ENCODE measurements at regions of chr6 and their contacts with region 1.

Region 1: GRCh38 chr6:90478789-90479602 is 107.9 kb downstream of the MAP3K7 start:
- DNase-seq: peak; percentile 77 to 89
- H3K4me3 ChIP-seq: no peak overlapping the region
- H3K27ac ChIP-seq: no peak overlapping the region
- H3K4me1 ChIP-seq: peaks cover 2 to 11% (median 5%) of the 10 kb centered on the region in 4 experiments; a peak in 4 of 7 replicates
- H3K27me3 ChIP-seq: no peaks in the 10 kb centered on the region
- CTCF ChIP-seq: peak; percentile 70 to 90 (median 84)
- EP300 ChIP-seq: no peak
- POLR2A ChIP-seq: no peak
- RAD21 ChIP-seq: peak; percentile 98 to 99

Region 2: DNA sequence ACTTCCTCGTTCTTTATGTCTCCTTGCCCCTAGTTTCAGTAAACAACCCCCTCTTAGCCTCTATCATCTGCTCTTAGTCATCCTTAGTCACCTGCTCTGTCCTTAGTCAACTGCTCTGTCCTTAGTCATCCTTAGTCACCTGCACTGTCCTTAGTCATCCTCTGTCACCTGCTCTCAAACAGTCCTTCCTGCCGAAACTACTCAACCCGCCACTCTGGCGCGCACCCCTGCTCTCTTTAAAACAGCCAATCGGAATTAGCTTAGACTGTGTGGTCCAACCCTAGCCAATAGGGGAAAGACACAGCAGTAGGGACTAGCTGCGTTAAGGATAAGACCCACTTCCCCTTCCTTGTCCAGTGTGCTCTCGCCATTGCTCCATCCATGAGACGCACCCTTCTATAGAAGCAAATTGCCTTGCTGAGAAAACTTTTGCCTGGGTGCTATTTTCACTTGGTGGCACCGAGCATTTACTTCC is 256.2 kb before region 1 on chr6:
- CTCF ChIA-PET with region 1: interaction called, 14 read pairs
- POLR2A ChIA-PET with region 1: no interaction called
- DNase-seq: no peak
- H3K4me3 ChIP-seq: no peak overlapping the region
- H3K27ac ChIP-seq: no peak overlapping the region
- H3K4me1 ChIP-seq: peaks cover 9 to 19% (median 13%) of the 10 kb centered on the region in 4 experiments; a peak in 5 of 7 replicates
- H3K27me3 ChIP-seq: no peaks in the 10 kb centered on the region
- CTCF ChIP-seq: no peak
- EP300 ChIP-seq: no peak
- POLR2A ChIP-seq: no peak
- RAD21 ChIP-seq: no peak

Region 3: DNA sequence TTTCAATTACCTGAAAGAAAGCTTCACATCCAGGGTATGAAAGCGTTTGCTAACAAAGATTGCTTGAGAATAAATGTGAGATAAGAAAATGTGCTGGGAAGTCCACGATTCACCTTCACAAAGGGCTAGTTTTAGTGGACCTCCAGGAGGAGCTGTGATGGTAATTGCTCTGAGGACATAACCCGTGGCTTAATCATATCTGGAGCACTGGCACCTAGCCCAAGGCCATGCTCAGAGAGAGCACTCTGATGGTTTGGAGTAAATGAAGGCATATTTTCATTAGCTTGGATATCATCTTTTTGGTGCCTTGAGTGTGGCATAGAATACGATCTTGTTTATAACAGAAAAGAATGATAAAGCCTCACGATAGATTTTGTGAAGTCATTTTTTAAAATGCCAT is 135.4 kb before region 1 on chr6:
- CTCF ChIA-PET with region 1: interaction called, 17 read pairs
- POLR2A ChIA-PET with region 1: no interaction called
- DNase-seq: no peak
- H3K4me3 ChIP-seq: no peak overlapping the region
- H3K27ac ChIP-seq: no peak overlapping the region
- H3K4me1 ChIP-seq: no peaks in the 10 kb centered on the region
- H3K27me3 ChIP-seq: no peaks in the 10 kb centered on the region
- CTCF ChIP-seq: no peak
- EP300 ChIP-seq: no peak
- POLR2A ChIP-seq: no peak
- RAD21 ChIP-seq: no peak

Region 4: DNA sequence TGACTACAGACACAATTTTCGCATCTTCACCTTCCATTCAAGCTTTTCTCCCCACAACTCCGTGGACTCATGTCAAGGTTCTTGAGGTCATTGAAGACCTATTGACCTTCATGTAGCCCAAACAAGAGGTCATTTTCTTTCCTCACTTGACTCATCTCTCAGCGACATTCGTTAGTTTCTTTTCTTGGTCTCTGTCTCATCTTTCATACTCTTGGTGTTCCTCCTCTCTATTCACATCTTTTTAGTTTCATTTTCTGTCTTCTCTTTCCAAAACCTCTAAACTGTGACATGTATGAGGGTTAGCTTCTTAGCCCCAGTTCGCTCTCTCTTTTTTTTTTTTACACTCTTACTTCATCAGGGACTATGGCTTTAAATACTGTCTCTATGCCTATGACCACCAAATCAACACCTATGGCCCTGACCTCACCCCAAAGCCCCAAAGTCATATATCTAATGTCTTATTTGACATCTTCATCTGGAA is 53.8 kb before region 1 on chr6:
- CTCF ChIA-PET with region 1: interaction called, 18 read pairs
- POLR2A ChIA-PET with region 1: no interaction called
- DNase-seq: no peak
- H3K4me3 ChIP-seq: no peak overlapping the region
- H3K27ac ChIP-seq: no peak overlapping the region
- H3K4me1 ChIP-seq: no peaks in the 10 kb centered on the region
- H3K27me3 ChIP-seq: no peaks in the 10 kb centered on the region
- CTCF ChIP-seq: no peak
- EP300 ChIP-seq: no peak
- POLR2A ChIP-seq: no peak
- RAD21 ChIP-seq: no peak

Region 5: GRCh38 chr6:90458353-90459224 is 20.4 kb before region 1 on chr6:
- CTCF ChIA-PET with region 1: interaction called, 179 read pairs
- POLR2A ChIA-PET with region 1: interaction called, 3 read pairs
- DNase-seq: no peak
- H3K4me3 ChIP-seq: no peak overlapping the region
- H3K27ac ChIP-seq: no peak overlapping the region
- H3K4me1 ChIP-seq: no peaks in the 10 kb centered on the region
- H3K27me3 ChIP-seq: no peaks in the 10 kb centered on the region
- CTCF ChIP-seq: no peak
- EP300 ChIP-seq: no peak
- POLR2A ChIP-seq: no peak
- RAD21 ChIP-seq: no peak

Region 6: DNA sequence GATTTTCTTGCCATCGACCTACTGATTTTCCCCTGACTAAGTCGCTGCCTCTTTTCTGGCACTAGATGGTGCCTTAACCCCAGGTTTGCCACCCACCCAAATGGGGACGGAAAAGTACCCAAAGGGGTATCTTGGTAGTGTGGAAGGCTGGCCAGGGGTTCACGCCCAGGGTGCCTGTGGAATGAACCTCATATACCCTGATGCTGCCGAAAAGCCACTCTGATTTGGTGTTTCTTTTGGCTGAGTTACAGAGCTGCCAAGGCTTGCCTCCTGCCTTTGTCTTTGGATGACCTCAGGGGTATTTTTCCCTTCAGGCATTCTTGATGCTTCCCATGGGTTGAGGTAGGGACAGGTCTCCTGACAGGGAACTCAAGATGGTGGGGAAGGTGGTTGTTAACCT is 29.8 kb after region 1 on chr6:
- CTCF ChIA-PET with region 1: interaction called, 21 read pairs
- POLR2A ChIA-PET with region 1: no interaction called
- DNase-seq: peak in 1 of 2 experiments; percentile 61
- H3K4me3 ChIP-seq: no peak overlapping the region
- H3K27ac ChIP-seq: no peak overlapping the region
- H3K4me1 ChIP-seq: no peaks in the 10 kb centered on the region
- H3K27me3 ChIP-seq: no peaks in the 10 kb centered on the region
- CTCF ChIP-seq: peak; percentile 51 to 67 (median 59)
- EP300 ChIP-seq: no peak
- POLR2A ChIP-seq: no peak
- RAD21 ChIP-seq: peak; percentile 85 to 88

Region 7: GRCh38 chr6:90770778-90771177 is 291.8 kb after region 1 on chr6:
- CTCF ChIA-PET with region 1: no interaction called
- POLR2A ChIA-PET with region 1: no interaction called
- DNase-seq: no peak
- H3K4me3 ChIP-seq: no peak overlapping the region
- H3K27ac ChIP-seq: no peak overlapping the region
- H3K4me1 ChIP-seq: no peaks in the 10 kb centered on the region
- H3K27me3 ChIP-seq: no peaks in the 10 kb centered on the region
- CTCF ChIP-seq: no peak
- EP300 ChIP-seq: no peak
- POLR2A ChIP-seq: no peak
- RAD21 ChIP-seq: no peak

Region 8: DNA sequence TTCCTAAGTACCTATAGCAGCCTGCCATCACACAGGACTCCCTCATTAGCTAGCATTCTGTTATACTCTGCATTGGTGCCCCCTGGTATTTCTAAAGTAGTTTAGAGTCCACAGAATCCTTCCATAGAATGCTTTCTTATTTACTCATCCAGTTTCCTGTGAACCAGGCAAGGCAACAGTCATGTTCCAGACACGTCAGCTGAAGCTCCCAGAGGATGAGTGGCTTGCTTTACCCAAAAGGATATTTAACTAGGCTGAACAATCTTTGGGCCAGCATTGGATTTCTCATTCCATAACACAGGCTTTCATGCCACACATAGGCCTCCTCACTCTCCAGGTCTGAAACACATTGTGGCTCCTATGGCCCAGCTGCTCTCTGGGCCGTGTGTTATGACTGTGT is 311.7 kb after region 1 on chr6:
- CTCF ChIA-PET with region 1: no interaction called
- POLR2A ChIA-PET with region 1: no interaction called
- DNase-seq: no peak
- H3K4me3 ChIP-seq: no peak overlapping the region
- H3K27ac ChIP-seq: no peak overlapping the region
- H3K4me1 ChIP-seq: no peaks in the 10 kb centered on the region; a peak in 1 of 7 replicates
- H3K27me3 ChIP-seq: no peaks in the 10 kb centered on the region
- CTCF ChIP-seq: no peak
- EP300 ChIP-seq: no peak
- POLR2A ChIP-seq: no peak
- RAD21 ChIP-seq: no peak

Measured in H1 (cell line).